ENCODE measurements at regions of chr10 and their contacts with region 1.

Region 1: DNA sequence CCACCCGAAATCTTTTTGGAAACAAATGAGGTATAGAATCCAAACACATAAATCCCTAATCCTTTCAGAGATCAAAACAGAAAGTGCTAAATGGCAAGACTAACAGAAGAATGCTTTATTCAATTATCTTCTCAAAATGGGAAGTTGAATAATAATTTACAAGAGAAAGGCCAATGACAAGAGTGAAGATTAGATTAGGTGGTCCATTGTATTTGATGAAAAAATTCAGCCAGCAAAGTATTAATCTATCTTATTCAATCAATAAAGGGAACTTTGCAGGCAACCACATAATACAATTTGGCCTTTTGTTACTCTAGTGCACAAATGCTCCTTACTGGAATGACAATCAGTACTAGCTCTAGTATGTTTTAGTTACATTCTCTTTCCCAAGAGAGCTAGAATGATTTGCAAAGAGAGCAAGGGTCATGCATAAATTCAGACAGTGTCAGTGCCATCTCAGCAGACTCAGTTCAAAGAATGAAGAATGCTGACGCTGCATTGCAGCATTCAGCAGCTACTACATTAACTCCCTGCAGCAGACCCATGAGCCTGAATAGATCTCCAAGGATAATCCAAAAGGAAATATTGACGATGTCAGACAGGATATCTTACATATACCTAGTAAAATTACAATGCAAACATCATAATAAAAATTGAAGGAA is 131.8 kb downstream of the ANK3 start:
- DNase-seq: no peak
- ATAC-seq: no peak
- H3K4me3 Mint-ChIP-seq: no peak overlapping the region
- H3K27ac Mint-ChIP-seq: no peak overlapping the region
- H3K4me1 Mint-ChIP-seq: peaks cover 6% of the 10 kb centered on the region
- H3K27me3 Mint-ChIP-seq: no peaks in the 10 kb centered on the region
- CTCF ChIP-seq: no peak

Region 2: GRCh38 chr10:60175441-60175971 is 82.4 kb before region 1 on chr10:
- CTCF ChIA-PET with region 1: no interaction called
- POLR2A ChIA-PET with region 1: interaction called, 12 read pairs
- intact Hi-C with region 1: no loop called
- DNase-seq: no peak
- ATAC-seq: no peak
- H3K4me3 Mint-ChIP-seq: no peak overlapping the region
- H3K27ac Mint-ChIP-seq: no peak overlapping the region
- H3K4me1 Mint-ChIP-seq: no peaks in the 10 kb centered on the region
- H3K27me3 Mint-ChIP-seq: no peaks in the 10 kb centered on the region
- CTCF ChIP-seq: no peak

Measured in activated B cell treated with CpG ODN at 0.5 μM for 24 hours (primary cell).